ENCODE measurements at regions of chr18 and their contacts with region 1.

Region 1: DNA sequence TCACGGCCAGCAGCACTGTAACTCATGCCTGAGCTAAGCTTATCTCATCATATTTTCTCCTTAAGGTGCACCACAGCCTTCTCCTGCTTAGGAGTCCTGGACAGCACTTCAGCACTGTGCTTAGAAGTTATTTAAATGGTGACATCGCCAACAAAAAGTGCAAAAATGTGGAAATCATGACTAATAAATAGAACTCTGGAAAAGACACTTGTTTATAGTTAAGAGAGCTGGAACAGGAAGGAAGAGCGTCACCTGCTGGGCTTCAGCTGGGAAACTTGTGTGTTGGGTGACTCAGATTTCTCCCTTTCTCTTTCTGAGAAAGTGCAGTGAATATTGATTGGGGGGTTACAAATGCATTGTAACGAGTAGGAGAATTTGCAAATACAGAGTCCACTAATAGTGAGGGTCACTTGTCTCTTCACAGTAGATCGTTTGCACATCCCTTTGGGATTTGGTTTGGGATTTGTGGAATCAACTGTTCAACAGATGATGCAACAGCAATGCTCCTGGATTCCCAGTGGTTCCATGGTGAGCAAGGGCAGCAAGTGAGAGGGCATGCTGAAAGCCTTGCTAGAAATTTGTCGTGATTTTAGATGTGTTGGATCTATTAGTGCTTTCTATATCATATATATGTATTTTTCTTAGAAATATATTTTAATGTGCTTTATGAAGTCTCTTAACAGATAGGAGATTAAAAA is 84.2 kb downstream of the DOK6 start:
- DNase-seq: no peak
- ATAC-seq: no peak

Region 2: DNA sequence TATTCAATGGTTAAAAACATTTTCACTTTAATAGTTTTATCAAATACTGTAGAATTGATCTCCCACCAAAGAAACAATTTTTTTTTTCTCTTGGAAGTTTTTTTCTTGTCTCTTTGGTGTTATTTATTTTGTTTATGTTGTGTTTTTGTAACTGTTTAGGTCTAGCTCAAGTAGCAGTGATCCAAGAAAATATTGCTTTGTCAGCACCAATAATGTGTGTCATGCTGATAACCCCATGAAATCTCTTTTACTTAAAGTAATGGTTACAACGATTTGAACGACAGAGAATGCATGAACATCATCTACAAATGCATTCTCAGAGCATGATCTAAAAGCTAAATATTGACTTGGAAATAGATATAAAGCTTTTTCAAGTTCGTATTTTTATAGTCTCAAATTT is 38.7 kb after region 1 on chr18:
- intact Hi-C with region 1: loop called in 1 of 2 experiments (anchors 5 kb)
- DNase-seq: no peak
- ATAC-seq: no peak

Region 3: GRCh38 chr18:69916412-69916811 is 431.6 kb after region 1 on chr18:
- intact Hi-C with region 1: no loop called
- DNase-seq: no peak
- ATAC-seq: no peak